AG04450 (cell line): ENCODE measurements at regions of chr9 and their contacts with region 1.

Region 1: DNA sequence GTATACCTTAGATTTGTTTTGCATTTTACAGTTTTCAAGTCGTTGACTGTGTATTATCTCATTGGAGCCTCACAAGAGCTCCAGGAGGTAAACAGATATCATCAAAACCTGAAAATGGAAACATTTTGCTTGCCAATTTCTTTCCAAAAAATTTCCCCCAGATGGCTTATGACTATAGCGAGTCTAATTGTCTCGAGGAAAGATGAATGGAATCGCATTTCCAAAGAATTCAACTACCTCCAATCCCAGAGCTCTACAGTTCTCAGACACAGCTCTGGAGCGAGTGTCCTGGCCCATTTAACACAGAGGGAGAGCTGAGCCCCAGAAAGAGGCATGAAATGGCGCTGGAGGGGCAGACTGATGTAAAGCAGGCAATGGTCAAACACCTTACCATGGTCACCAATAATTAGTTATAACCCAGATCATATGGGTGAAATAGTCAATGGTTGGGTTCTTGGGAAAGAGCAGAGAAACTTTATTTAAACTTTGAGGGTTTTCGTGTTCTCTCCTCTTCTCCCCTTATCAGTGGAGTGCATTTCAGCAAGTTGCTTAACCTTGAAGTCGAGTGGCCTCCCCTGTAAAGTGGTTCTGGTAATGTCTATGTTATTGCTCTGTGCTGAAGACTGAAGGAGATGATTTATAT is 168.2 kb downstream of the ZDHHC21 start:
- DNase-seq: no peak
- H3K4me3 ChIP-seq: no peak overlapping the region
- H3K27ac ChIP-seq: no peak overlapping the region
- H3K27me3 ChIP-seq: no peaks in the 10 kb centered on the region
- CTCF ChIP-seq: no peak

Region 2: DNA sequence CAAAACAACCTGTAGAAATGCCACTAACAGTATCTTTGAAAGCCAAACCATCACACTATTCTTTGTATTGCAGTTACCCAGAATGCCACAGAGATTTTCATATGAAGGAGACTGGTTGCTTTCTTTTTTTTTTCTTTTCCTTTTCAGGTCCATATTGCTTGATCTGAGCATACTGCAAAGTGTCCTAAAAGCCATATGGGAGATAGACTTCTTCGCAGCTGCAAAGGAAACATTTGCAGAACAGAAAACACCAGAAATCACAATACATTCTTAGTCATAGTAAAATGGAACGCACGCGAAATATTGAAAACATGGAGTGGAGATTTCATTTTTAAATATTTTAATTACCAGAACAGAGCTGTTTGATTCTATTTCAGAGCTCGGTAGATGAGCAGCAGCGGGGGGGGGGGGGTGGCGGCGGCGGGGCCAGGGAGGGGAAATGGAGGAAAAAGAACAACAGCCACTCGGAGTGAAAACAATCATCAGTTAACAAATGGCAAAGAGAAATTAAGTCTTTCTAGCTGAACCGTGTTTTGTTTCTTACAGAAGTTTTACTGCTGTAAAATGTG is 495.1 kb before region 1 on chr9:
- CTCF ChIA-PET with region 1: interaction called, 14 read pairs
- POLR2A ChIA-PET with region 1: no interaction called
- DNase-seq: no peak
- H3K4me3 ChIP-seq: peak overlapping the region; percentile 51
- H3K27ac ChIP-seq: no peak overlapping the region
- H3K27me3 ChIP-seq: peaks cover 9% of the 10 kb centered on the region
- CTCF ChIP-seq: no peak